Activated CD4-positive, alpha-beta T cell treated with anti-CD3 and anti-CD28 coated beads for 36 hours (primary cell): ENCODE measurements at regions of chr2 and their contacts with region 1.

Region 1: DNA sequence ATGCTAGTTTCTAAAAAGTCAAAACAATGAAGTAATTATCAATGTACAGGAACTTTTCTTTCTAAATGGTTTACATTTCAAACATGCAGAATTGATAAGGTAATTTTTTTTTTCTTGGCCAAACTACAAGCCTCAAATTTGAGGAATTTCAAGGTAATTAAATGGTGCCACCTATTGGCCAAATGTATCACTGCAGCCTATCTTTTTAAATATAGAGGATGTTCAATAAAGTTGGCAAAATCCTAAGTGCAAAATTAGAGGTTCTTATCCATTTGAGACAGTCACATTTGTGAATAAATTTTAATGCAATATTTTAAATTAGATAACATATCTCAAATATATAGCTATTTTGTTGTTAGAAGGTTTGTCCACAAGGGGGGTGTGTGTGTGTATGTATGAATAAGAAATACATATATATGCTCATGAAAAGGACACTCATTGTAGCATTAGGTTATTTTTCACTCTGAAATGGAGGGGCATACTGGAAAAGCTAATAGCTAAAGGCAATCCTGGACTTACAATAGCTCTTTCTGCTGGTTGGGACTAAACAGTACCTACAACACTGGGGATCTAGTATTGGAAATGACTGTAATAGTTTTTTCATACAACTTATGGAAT is 26.2 kb downstream of the MMADHC start:
- DNase-seq: peak; percentile 15
- ATAC-seq: no peak
- H3K4me3 Mint-ChIP-seq: no peak overlapping the region
- H3K27ac Mint-ChIP-seq: no peak overlapping the region
- H3K4me1 Mint-ChIP-seq: no peaks in the 10 kb centered on the region
- H3K27me3 Mint-ChIP-seq: no peaks in the 10 kb centered on the region

Region 2: GRCh38 chr2:147937744-147938349 is 1623.6 kb before region 1 on chr2:
- CTCF ChIA-PET with region 1: no interaction called
- POLR2A ChIA-PET with region 1: no interaction called
- intact Hi-C with region 1: loop called (anchors 5 kb)
- DNase-seq: no peak
- ATAC-seq: no peak
- H3K4me3 Mint-ChIP-seq: no peak overlapping the region
- H3K27ac Mint-ChIP-seq: no peak overlapping the region
- H3K4me1 Mint-ChIP-seq: no peaks in the 10 kb centered on the region
- H3K27me3 Mint-ChIP-seq: no peaks in the 10 kb centered on the region

Region 3: GRCh38 chr2:149040451-149040850 is 521.0 kb before region 1 on chr2:
- CTCF ChIA-PET with region 1: no interaction called
- POLR2A ChIA-PET with region 1: no interaction called
- intact Hi-C with region 1: loop called in 1 of 2 experiments (anchors 1 kb)
- DNase-seq: peak; percentile 79
- ATAC-seq: peak; percentile 72
- H3K4me3 Mint-ChIP-seq: no peak overlapping the region
- H3K27ac Mint-ChIP-seq: no peak overlapping the region
- H3K4me1 Mint-ChIP-seq: no peaks in the 10 kb centered on the region
- H3K27me3 Mint-ChIP-seq: peaks cover 44% of the 10 kb centered on the region

Region 4: DNA sequence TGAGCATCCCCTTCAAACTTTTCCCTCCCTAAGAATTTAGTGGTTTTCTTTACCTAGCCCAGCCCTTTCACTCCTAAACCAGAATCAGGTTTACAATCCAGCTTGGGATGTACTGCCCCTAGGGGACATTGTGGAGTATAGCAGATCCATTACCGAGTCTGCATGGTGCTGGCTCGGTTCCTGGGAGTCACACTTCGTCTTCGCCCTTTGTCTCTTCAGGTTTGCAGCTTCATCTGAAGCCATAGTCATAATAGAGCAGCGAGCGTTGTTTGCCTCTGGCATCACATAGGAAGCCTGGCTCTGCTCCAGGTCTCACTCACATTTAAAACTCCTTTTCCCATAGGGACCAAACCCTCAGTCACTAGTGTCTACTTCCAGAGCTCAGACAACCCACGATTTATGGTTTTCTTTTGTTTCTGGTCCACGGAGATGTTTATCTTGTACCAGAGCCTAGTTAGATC is 247.9 kb before region 1 on chr2:
- CTCF ChIA-PET with region 1: interaction called, 3 read pairs
- POLR2A ChIA-PET with region 1: no interaction called
- intact Hi-C with region 1: loop called (anchors 5 to 10 kb)
- DNase-seq: peak; percentile 15
- ATAC-seq: peak; percentile 61
- H3K4me3 Mint-ChIP-seq: no peak overlapping the region
- H3K27ac Mint-ChIP-seq: no peak overlapping the region
- H3K4me1 Mint-ChIP-seq: no peaks in the 10 kb centered on the region
- H3K27me3 Mint-ChIP-seq: peaks cover 9% of the 10 kb centered on the region

Region 5: DNA sequence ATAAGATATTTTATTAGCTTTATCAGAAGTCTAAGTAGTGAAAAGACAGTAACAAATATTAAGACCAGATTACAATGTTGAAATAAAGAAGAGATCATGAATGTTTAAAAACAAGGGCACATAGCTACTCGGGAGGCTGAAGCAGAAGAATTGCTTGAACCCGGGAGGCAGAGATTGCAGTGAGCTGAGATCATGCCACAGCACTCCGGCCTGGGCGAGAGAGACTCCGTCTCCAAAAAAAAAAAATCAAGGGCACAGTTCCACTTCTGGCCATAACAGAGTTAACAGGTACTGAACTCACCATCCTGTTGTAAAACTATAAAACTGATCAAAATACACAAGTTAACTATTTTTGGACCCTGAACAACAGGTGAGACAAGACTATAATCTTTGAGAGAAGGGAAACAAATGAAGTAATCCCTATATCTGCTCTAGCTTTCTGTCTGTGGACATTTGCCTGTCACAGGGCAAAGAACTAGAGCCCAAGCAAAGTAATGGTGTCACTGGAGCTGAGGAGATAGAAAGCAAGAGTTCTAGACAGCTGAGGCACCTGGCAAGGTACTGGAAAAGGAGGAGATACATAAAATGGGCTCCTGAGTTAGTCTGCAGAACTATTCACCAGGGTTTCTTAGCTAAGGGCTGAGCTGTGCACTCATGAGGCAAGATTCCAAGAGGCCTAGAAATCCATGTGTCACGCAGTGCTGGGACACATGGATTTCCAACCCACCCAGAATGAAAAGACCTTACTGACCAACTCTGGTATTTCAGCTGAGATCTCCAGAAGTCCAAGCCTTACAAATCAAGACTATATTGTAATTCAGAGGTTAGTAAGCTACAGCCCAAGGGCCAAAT is 10.9 kb after region 1 on chr2:
- CTCF ChIA-PET with region 1: interaction called, 17 read pairs
- POLR2A ChIA-PET with region 1: no interaction called
- intact Hi-C with region 1: no loop called
- DNase-seq: no peak
- ATAC-seq: no peak
- H3K4me3 Mint-ChIP-seq: no peak overlapping the region
- H3K27ac Mint-ChIP-seq: no peak overlapping the region
- H3K4me1 Mint-ChIP-seq: peaks cover 7% of the 10 kb centered on the region
- H3K27me3 Mint-ChIP-seq: no peaks in the 10 kb centered on the region

Region 6: GRCh38 chr2:149587220-149587949 is 26.0 kb after region 1 on chr2 and contains the start of gene MMADHC:
- CTCF ChIA-PET with region 1: interaction called, 4 read pairs
- POLR2A ChIA-PET with region 1: no interaction called
- intact Hi-C with region 1: loop called in 1 of 2 experiments (anchors 2 kb)
- DNase-seq: peak; percentile 96
- ATAC-seq: peak; percentile 99
- H3K4me3 Mint-ChIP-seq: peak within 1 kb of the TSS; percentile 92
- H3K27ac Mint-ChIP-seq: peak within 1 kb of the TSS; percentile 99
- H3K4me1 Mint-ChIP-seq: peaks cover 41% of the 10 kb centered on the region
- H3K27me3 Mint-ChIP-seq: peaks cover 12% of the 10 kb centered on the region
- total RNA-seq, gene MMADHC: 94.7 to 136 TPM